Activated CD4-positive, alpha-beta memory T cell treated with anti-CD3 and anti-CD28 coated beads for 36 hours (primary cell): ENCODE measurements at regions of chr3 and their contacts with region 1.

Region 1: GRCh38 chr3:114435386-114436115 is 141.7 kb downstream of the TIGIT start:
- DNase-seq: no peak
- H3K4me3 Mint-ChIP-seq: no peak overlapping the region
- H3K27ac Mint-ChIP-seq: no peak overlapping the region
- H3K4me1 Mint-ChIP-seq: peaks cover 5% of the 10 kb centered on the region
- H3K27me3 Mint-ChIP-seq: no peaks in the 10 kb centered on the region

Region 2: GRCh38 chr3:114400371-114400770 is 35.2 kb before region 1 on chr3:
- CTCF ChIA-PET with region 1: no interaction called
- POLR2A ChIA-PET with region 1: no interaction called
- intact Hi-C with region 1: loop called (anchors 2 kb)
- DNase-seq: no peak
- H3K4me3 Mint-ChIP-seq: no peak overlapping the region
- H3K27ac Mint-ChIP-seq: no peak overlapping the region
- H3K4me1 Mint-ChIP-seq: peaks cover 9% of the 10 kb centered on the region
- H3K27me3 Mint-ChIP-seq: no peaks in the 10 kb centered on the region

Region 3: DNA sequence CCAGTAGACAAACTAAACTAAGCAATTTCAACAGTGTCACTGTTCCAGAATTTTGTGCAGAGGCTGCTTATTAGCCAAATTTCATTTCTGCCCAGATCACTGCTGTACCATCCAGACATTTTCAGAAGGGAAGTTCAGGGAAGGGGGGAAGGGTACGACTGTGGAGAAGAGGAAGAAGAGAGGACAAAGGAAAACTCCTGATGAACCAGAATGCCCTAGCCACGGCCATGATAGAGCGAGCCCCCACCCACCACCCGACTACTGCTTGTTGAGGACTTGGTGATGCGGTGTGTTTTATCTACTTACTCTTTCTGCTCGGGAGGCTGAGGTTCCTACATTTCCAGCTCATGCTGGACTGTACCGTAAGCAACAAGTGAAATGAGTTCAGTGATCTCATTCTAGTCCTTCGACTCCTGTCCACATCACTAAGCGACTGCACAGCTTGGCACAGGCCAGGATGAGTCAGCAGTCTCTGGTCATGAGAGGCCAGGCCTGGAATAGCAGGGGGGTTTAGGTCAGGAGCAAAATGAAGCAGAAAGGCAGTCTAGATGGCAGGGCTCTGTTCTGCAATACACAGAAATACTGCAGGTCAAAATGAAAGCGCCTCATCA is 189.1 kb after region 1 on chr3:
- CTCF ChIA-PET with region 1: no interaction called
- POLR2A ChIA-PET with region 1: no interaction called
- intact Hi-C with region 1: no loop called
- DNase-seq: peak; percentile 17
- H3K4me3 Mint-ChIP-seq: no peak overlapping the region
- H3K27ac Mint-ChIP-seq: no peak overlapping the region
- H3K4me1 Mint-ChIP-seq: peaks cover 2% of the 10 kb centered on the region
- H3K27me3 Mint-ChIP-seq: no peaks in the 10 kb centered on the region